MCF 10A (cell line): ENCODE measurements at regions of chr3 and their contacts with region 1.

Region 1: GRCh38 chr3:132034486-132035464 is at the start of gene CPNE4:
- DNase-seq: peak; percentile 87
- H3K4me3 Mint-ChIP-seq: peak within 1 kb of the TSS; percentile 73
- H3K27ac Mint-ChIP-seq: no peak within 1 kb of the TSS
- H3K4me1 Mint-ChIP-seq: peaks cover 10% of the 10 kb centered on the region
- H3K27me3 Mint-ChIP-seq: peaks cover 44% of the 10 kb centered on the region
- CTCF ChIP-seq: peak; percentile 91
- total RNA-seq, gene CPNE4: not detected in 2 replicates

Region 2: DNA sequence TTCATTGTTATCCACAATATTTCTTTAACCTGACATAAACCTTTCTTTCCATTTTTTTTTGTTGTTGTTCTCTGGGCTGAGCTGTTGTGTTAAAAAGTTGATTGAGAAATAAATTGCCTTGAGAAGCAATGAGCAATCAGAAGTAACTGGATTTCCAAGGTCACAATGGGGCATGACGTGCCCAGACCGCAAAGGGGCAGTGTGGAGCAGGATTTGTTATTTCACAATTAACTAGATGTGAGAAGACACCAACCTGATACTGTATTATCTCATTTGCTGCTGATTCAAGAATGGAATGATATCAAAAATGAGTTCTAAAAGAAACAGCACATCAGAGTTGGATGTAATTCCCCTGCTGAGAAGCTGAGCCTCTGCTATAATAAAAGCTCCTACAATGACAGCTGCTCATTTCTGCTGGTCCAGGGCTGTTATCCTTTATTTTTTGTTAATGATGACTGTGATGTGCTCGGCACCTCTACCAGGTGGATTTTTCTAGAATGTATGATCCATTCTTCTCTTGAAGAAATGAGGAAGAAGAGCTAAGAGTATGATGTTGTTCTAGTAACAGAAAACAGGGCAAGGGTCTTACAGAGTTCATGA is 28.1 kb before region 1 on chr3:
- CTCF ChIA-PET with region 1: interaction called, 49 read pairs
- POLR2A ChIA-PET with region 1: no interaction called
- intact Hi-C with region 1: loop called (anchors 1 kb)
- DNase-seq: peak; percentile 71
- H3K4me3 Mint-ChIP-seq: no peak overlapping the region
- H3K27ac Mint-ChIP-seq: no peak overlapping the region
- H3K4me1 Mint-ChIP-seq: no peaks in the 10 kb centered on the region
- H3K27me3 Mint-ChIP-seq: no peaks in the 10 kb centered on the region
- CTCF ChIP-seq: peak; percentile 39

Region 3: GRCh38 chr3:132071043-132071442 is 36.3 kb after region 1 on chr3:
- CTCF ChIA-PET with region 1: interaction called, 14 read pairs
- POLR2A ChIA-PET with region 1: no interaction called
- intact Hi-C with region 1: no loop called
- DNase-seq: peak; percentile 39
- H3K4me3 Mint-ChIP-seq: no peak overlapping the region
- H3K27ac Mint-ChIP-seq: no peak overlapping the region
- H3K4me1 Mint-ChIP-seq: no peaks in the 10 kb centered on the region
- H3K27me3 Mint-ChIP-seq: no peaks in the 10 kb centered on the region
- CTCF ChIP-seq: no peak

Region 4: GRCh38 chr3:132164469-132165092 is 129.8 kb after region 1 on chr3:
- CTCF ChIA-PET with region 1: interaction called, 26 read pairs
- POLR2A ChIA-PET with region 1: no interaction called
- intact Hi-C with region 1: no loop called
- DNase-seq: peak; percentile 57
- H3K4me3 Mint-ChIP-seq: no peak overlapping the region
- H3K27ac Mint-ChIP-seq: no peak overlapping the region
- H3K4me1 Mint-ChIP-seq: peaks cover 8% of the 10 kb centered on the region
- H3K27me3 Mint-ChIP-seq: no peaks in the 10 kb centered on the region
- CTCF ChIP-seq: no peak

Region 5: GRCh38 chr3:132205609-132206008 is 170.8 kb after region 1 on chr3:
- CTCF ChIA-PET with region 1: interaction called, 81 read pairs
- POLR2A ChIA-PET with region 1: no interaction called
- intact Hi-C with region 1: no loop called
- DNase-seq: no peak
- H3K4me3 Mint-ChIP-seq: no peak overlapping the region
- H3K27ac Mint-ChIP-seq: no peak overlapping the region
- H3K4me1 Mint-ChIP-seq: peaks cover 5% of the 10 kb centered on the region
- H3K27me3 Mint-ChIP-seq: peaks cover 7% of the 10 kb centered on the region
- CTCF ChIP-seq: no peak

Region 6: DNA sequence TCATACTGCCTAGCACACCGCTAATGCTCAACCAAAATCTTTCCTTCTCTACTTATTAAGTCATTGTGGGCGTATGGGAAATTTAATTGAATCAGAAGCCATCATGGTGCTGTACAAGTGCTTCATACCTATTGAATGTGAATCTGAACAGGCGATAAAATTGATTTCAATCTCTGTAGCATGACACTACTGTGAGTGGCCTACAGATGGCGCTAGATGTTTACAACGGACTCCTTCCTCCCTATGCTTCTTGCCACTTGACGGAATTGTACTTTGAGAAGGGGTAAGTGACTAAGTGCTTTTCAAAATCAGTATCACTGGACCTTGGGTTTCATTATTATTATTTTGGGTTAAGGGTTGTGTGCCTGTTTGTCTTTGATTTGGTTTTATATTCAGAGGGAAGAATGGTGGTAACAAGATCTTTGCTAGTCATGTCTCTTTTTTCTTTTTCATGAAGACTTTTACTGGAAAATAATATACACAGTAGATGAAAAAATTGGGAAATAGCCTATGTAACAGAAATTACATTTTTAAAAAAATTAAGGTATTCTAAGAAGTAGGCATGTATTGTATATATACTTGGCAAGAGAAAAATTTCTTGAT is 317.9 kb after region 1 on chr3:
- CTCF ChIA-PET with region 1: interaction called, 21 read pairs
- POLR2A ChIA-PET with region 1: no interaction called
- intact Hi-C with region 1: no loop called
- DNase-seq: peak; percentile 81
- H3K4me3 Mint-ChIP-seq: no peak overlapping the region
- H3K27ac Mint-ChIP-seq: no peak overlapping the region
- H3K4me1 Mint-ChIP-seq: peaks cover 6% of the 10 kb centered on the region
- H3K27me3 Mint-ChIP-seq: no peaks in the 10 kb centered on the region
- CTCF ChIP-seq: peak; percentile 90